Activated CD8-positive, alpha-beta T cell treated with anti-CD3 and anti-CD28 coated beads for 36 hours (primary cell): ENCODE measurements at regions of chr13 and their contacts with region 1.

Region 1: DNA sequence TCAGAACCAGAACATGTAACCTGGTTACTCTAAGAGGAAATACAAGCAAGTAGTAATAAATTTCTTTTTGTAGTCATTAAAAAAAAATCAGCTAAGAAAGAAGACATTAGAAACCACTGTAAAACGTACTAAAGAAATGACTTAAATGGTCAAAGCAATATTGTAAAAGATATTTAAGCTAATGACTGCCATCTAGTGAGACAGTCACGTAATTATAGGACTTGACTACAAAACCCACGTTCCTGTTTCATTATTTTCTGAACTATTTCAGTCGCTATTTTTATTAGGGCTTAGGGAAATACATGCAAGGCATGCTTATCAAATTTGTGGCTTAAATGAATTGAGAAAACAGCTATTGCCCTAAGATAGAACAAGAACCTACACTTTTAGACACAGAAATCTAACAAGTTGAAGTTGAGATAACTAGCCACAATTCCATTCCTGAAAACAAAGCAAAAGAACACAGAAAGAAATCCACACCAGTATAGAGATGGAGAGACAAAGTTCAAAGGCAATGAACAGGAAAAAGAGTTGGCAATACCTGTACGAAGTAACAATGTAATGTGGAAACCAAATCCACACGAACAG is 17.9 kb downstream of the ALG5 start:
- DNase-seq: no peak
- ATAC-seq: no peak
- H3K4me3 Mint-ChIP-seq: no peak overlapping the region
- H3K27ac Mint-ChIP-seq: no peak overlapping the region
- H3K4me1 Mint-ChIP-seq: peaks cover 2% of the 10 kb centered on the region
- H3K27me3 Mint-ChIP-seq: no peaks in the 10 kb centered on the region
- CTCF ChIP-seq: peak; percentile 66

Region 2: DNA sequence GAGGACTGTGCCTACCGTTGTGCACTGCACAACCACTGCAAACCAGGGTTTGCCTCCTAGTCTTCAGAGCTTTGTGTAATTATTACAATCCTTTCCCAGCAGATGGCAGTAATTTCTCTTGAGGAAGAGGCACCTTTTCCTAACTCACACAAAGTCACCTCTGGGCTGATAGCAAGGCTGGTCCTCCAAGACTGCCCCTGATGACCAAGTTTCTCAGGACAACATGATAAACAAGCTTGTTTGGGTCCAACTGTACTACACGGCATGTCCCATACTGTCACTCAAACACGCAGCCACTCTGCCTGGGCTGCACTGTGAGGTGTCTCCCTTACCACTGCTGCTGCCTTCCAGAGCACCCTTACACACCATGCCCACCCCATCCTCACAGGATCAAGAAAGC is 123.0 kb before region 1 on chr13:
- CTCF ChIA-PET with region 1: interaction called, 6 read pairs
- POLR2A ChIA-PET with region 1: no interaction called
- intact Hi-C with region 1: loop called (anchors 10 kb)
- DNase-seq: no peak
- ATAC-seq: peak; percentile 53
- H3K4me3 Mint-ChIP-seq: no peak overlapping the region
- H3K27ac Mint-ChIP-seq: no peak overlapping the region
- H3K4me1 Mint-ChIP-seq: peaks cover 5% of the 10 kb centered on the region
- H3K27me3 Mint-ChIP-seq: peaks cover 25% of the 10 kb centered on the region
- CTCF ChIP-seq: peak; percentile 61

Region 3: GRCh38 chr13:36992340-36992739 is 11.1 kb after region 1 on chr13:
- CTCF ChIA-PET with region 1: interaction called, 11 read pairs
- POLR2A ChIA-PET with region 1: interaction called, 5 read pairs
- intact Hi-C with region 1: no loop called
- DNase-seq: no peak
- ATAC-seq: no peak
- H3K4me3 Mint-ChIP-seq: no peak overlapping the region
- H3K27ac Mint-ChIP-seq: no peak overlapping the region
- H3K4me1 Mint-ChIP-seq: peaks cover 14% of the 10 kb centered on the region
- H3K27me3 Mint-ChIP-seq: no peaks in the 10 kb centered on the region
- CTCF ChIP-seq: no peak